ENCODE measurements at regions of chr17 and their contacts with region 1.

Region 1: DNA sequence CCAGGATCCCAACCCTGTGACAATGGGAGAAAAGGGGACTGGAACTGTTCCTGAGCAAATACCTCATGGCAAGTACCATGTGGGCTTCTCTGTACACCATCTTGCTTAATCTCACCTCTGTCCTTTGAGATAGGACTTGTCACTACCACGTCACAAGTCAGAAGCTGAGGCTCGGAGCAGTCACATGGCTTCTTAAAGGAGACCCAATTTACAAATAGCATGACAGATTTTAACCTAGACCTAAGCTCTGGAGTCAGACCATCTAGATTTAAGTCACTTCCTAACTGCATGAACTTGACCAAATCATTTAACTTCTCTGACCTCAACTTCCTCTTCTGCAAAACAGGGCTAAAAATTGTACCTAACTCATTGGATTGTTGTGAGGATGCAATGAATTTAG is 36.0 kb upstream of the CCL1 start:
- DNase-seq: no peak
- H3K4me3 ChIP-seq: no peak overlapping the region
- H3K27ac ChIP-seq: no peak overlapping the region
- H3K4me1 ChIP-seq: no peaks in the 10 kb centered on the region
- H3K27me3 ChIP-seq: peaks cover 5 to 13% of the 10 kb centered on the region in 2 experiments
- CTCF ChIP-seq: no peak
- POLR2A ChIP-seq: no peak

Region 2: DNA sequence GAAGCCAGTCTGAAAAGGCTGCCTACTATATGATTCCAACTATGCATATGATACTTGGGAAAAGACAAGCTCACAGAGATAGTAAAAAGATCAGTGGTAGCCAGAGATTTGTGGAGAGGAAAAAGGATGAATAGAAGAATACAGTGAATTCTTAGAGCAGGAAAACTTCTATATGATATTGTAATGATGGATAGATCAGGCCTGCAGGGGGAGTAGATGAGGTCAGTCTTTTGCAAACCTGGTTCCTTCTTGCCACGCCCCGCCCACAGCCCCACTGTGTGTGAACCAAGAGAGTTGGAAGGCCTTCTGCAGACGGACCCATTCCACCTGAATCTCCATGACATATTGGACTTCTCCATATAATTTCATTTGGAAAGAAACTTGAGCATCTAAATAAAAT is 80.5 kb before region 1 on chr17:
- CTCF ChIA-PET with region 1: no interaction called
- POLR2A ChIA-PET with region 1: no interaction called
- dilution Hi-C with region 1: no loop called
- intact Hi-C with region 1: no loop called
- DNase-seq: no peak
- H3K4me3 ChIP-seq: no peak overlapping the region
- H3K27ac ChIP-seq: no peak overlapping the region
- H3K4me1 ChIP-seq: no peaks in the 10 kb centered on the region
- H3K27me3 ChIP-seq: peaks cover 8 to 15% of the 10 kb centered on the region in 2 experiments
- CTCF ChIP-seq: no peak
- POLR2A ChIP-seq: no peak

Region 3: DNA sequence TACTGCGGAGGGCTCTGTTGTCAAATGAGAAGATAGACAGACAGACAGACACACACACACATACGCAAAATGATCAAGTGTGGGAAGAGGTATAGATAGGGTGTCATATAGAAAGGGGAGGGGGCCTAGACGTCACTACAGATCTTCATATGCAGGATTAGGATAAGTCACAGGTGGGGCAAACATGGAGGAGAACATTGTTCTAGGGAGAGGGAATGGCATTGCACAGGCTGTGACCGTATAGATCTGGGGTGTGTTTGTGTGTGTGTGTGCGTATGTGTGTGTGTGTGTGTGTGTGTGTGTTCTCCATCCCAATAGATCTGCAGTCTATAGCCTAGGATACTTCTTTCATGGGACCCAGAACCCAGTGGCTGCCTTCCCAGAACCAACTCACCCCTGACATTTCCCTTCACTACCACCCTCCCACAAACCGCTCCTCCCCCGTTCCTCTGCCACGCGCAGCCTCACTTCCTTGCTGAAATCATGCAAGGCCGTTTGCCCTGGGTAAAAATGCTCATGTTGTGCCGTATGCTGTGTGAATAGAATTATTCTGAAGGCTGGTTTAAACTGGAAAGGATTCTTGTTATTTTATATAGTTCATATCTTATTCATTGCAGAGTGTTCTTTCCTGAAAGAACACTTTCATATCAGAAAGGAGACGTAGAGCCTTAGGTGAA is 14.6 kb after region 1 on chr17:
- CTCF ChIA-PET with region 1: interaction called, 12 read pairs
- POLR2A ChIA-PET with region 1: no interaction called
- dilution Hi-C with region 1: no loop called
- intact Hi-C with region 1: no loop called
- DNase-seq: no peak
- H3K4me3 ChIP-seq: no peak overlapping the region
- H3K27ac ChIP-seq: peak overlapping the region; percentile 73
- H3K4me1 ChIP-seq: peaks cover 14% of the 10 kb centered on the region
- H3K27me3 ChIP-seq: peaks cover 0 to 6% of the 10 kb centered on the region in 2 experiments
- CTCF ChIP-seq: no peak
- POLR2A ChIP-seq: no peak

Measured in endothelial cell of umbilical vein (primary cell).